Naive thymus-derived CD4-positive, alpha-beta T cell (primary cell): ENCODE measurements at regions of chr10 and their contacts with region 1.

Region 1: GRCh38 chr10:72273410-72274212 is at the start of gene DDIT4:
- DNase-seq: peak; percentile 92 to 98 (median 97)
- ATAC-seq: peak; percentile 97
- H3K4me3 ChIP-seq: peak within 1 kb of the TSS; percentile 95
- H3K4me3 Mint-ChIP-seq: peak within 1 kb of the TSS; percentile 97 to 100 (median 99)
- H3K27ac ChIP-seq: peak within 1 kb of the TSS; percentile 96
- H3K27ac Mint-ChIP-seq: peak within 1 kb of the TSS; percentile 93 to 98 (median 95)
- H3K4me1 ChIP-seq: peaks cover 9 to 20% of the 10 kb centered on the region in 2 donors
- H3K4me1 Mint-ChIP-seq: peaks cover 34 to 63% (median 59%) of the 10 kb centered on the region in 7 donors
- H3K27me3 ChIP-seq: no peaks in the 10 kb centered on the region
- H3K27me3 Mint-ChIP-seq: no peaks in the 10 kb centered on the region
- total RNA-seq, gene DDIT4: 25.4 to 335 (median 135) TPM

Region 2: GRCh38 chr10:72048450-72049124 is 225.0 kb before region 1 on chr10:
- CTCF ChIA-PET with region 1: interaction called, 3 read pairs
- POLR2A ChIA-PET with region 1: no interaction called
- intact Hi-C with region 1: loop called in 1 of 2 experiments (anchors 2 kb)
- DNase-seq: peak; percentile 68 to 88 (median 83)
- ATAC-seq: peak; percentile 99
- H3K4me3 ChIP-seq: no peak overlapping the region
- H3K4me3 Mint-ChIP-seq: no peak overlapping the region
- H3K27ac ChIP-seq: no peak overlapping the region
- H3K27ac Mint-ChIP-seq: peak overlapping the region in 6 of 9 donors; percentile 5 to 67 (median 32)
- H3K4me1 ChIP-seq: no peaks in the 10 kb centered on the region
- H3K4me1 Mint-ChIP-seq: peaks cover 7 to 10% (median 8%) of the 10 kb centered on the region in 7 donors
- H3K27me3 ChIP-seq: no peaks in the 10 kb centered on the region
- H3K27me3 Mint-ChIP-seq: no peaks in the 10 kb centered on the region

Region 3: DNA sequence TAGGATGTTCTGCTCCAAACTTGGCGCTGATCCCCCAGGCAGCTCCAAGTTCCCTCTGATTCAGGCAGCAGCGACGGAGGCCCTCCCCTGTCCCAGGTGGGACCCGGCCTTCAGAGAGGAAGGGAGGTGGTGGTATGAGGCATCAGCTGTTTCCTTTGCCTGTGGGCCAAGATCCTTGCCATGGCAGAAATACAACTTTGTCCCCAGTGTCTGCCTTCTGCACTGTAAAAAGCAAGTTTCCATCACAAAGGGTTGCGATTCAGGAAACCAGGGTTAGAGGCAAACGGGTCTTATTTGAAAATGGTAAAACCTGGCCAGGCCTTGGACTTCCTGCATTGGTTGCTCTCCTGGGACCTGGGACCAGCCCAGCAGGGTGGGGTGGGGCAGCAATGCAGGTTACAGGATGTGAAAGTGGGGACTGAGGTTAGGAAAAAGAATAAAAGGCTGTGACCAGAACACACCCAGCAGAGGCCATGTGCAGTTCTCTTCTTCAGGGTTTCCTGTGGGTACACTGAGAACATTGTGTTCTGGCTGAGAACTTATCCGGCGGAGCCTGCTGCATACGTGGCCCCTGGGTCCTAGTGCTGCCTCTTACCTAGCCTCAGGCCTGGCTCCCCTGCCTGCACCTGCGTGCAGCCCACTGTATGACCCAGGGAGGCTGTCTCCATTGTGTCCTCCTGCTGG is 25.0 kb before region 1 on chr10:
- CTCF ChIA-PET with region 1: interaction called, 9 read pairs
- POLR2A ChIA-PET with region 1: interaction called, 219 read pairs
- intact Hi-C with region 1: loop called (anchors 1 kb)
- DNase-seq: peak; percentile 34 to 92 (median 83)
- ATAC-seq: peak; percentile 95
- H3K4me3 ChIP-seq: peak overlapping the region; percentile 59
- H3K4me3 Mint-ChIP-seq: peak overlapping the region; percentile 80 to 98 (median 84)
- H3K27ac ChIP-seq: peak overlapping the region; percentile 68
- H3K27ac Mint-ChIP-seq: peak overlapping the region; percentile 87 to 99 (median 96)
- H3K4me1 ChIP-seq: peaks cover 62 to 89% of the 10 kb centered on the region in 2 donors
- H3K4me1 Mint-ChIP-seq: peaks cover 63 to 89% (median 83%) of the 10 kb centered on the region in 7 donors
- H3K27me3 ChIP-seq: no peaks in the 10 kb centered on the region
- H3K27me3 Mint-ChIP-seq: no peaks in the 10 kb centered on the region

Region 4: DNA sequence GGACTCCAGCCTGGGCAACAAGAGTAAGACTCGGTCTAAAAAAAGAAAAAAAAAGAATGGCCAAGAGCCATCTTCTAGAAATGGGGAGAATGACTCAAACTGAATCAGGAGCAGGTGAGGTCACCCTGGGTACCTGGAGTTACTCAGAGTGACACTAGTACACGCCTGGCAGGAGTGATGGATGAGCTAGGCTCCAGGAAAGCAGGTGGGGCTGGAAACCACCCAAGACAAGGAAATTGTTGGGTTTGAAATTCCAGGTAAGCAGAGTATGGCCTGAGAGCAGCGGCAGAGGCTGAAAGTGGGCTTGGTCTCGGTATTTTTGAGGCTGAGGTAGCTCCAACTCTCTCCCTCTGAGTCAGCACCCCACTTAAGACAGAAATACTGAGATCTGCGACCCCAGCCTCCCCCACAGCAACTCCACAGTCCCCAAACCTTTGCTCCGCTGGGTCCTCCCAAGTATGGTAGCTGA is 18.6 kb after region 1 on chr10:
- CTCF ChIA-PET with region 1: interaction called, 33 read pairs
- POLR2A ChIA-PET with region 1: interaction called, 93 read pairs
- intact Hi-C with region 1: loop called (anchors 1 kb)
- DNase-seq: no peak
- ATAC-seq: no peak
- H3K4me3 ChIP-seq: no peak overlapping the region
- H3K4me3 Mint-ChIP-seq: peak overlapping the region in 8 of 10 donors; percentile 2 to 63 (median 40)
- H3K27ac ChIP-seq: peak overlapping the region; percentile 8
- H3K27ac Mint-ChIP-seq: peak overlapping the region; percentile 57 to 100 (median 83)
- H3K4me1 ChIP-seq: peaks cover 24 to 43% of the 10 kb centered on the region in 2 donors
- H3K4me1 Mint-ChIP-seq: peaks cover 39 to 66% (median 64%) of the 10 kb centered on the region in 7 donors
- H3K27me3 ChIP-seq: no peaks in the 10 kb centered on the region
- H3K27me3 Mint-ChIP-seq: no peaks in the 10 kb centered on the region

Region 5: GRCh38 chr10:72319416-72320254 is 46.0 kb after region 1 on chr10:
- CTCF ChIA-PET with region 1: interaction called, 21 read pairs
- POLR2A ChIA-PET with region 1: interaction called, 174 read pairs
- intact Hi-C with region 1: loop called in 1 of 2 experiments (anchors 1 kb)
- DNase-seq: peak; percentile 82 to 90 (median 88)
- ATAC-seq: peak; percentile 85
- H3K4me3 ChIP-seq: peak overlapping the region; percentile 60
- H3K4me3 Mint-ChIP-seq: peak overlapping the region; percentile 69 to 89 (median 82)
- H3K27ac ChIP-seq: peak overlapping the region; percentile 94
- H3K27ac Mint-ChIP-seq: peak overlapping the region; percentile 90 to 98 (median 97)
- H3K4me1 ChIP-seq: peaks cover 61 to 90% of the 10 kb centered on the region in 2 donors
- H3K4me1 Mint-ChIP-seq: peaks cover 58 to 90% (median 83%) of the 10 kb centered on the region in 7 donors
- H3K27me3 ChIP-seq: no peaks in the 10 kb centered on the region
- H3K27me3 Mint-ChIP-seq: no peaks in the 10 kb centered on the region